Breast epithelium (tissue), 4 donors: ENCODE measurements at regions of chr2 and their contacts with region 1.

Region 1: GRCh38 chr2:227766373-227766883 is 20.7 kb downstream of the SCYGR8 start:
- DNase-seq: peak; percentile 45 to 69
- H3K4me3 ChIP-seq: no peak overlapping the region
- H3K27ac ChIP-seq: no peak overlapping the region
- H3K4me1 ChIP-seq: no peaks in the 10 kb centered on the region
- H3K27me3 ChIP-seq: no peaks in the 10 kb centered on the region
- CTCF ChIP-seq: peak; percentile 69 to 92 (median 83)
- POLR2A ChIP-seq: no peak

Region 2: DNA sequence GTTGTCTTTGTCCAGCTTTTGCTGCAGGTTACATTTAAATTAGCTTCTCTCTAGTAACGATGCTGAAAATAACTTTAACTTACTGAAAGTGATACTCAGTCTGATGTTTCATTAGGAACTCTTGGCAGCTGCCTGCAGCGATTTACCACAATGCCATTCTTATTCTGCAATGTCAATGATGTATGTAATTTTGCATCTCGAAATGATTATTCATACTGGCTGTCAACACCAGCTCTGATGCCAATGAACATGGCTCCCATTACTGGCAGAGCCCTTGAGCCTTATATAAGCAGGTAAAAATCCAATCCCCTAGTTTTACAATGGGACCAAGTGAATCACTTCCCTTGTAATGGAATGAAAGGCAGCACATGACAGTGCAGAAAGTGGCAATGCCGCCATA is 457.6 kb before region 1 on chr2:
- intact Hi-C with region 1: no loop called
- DNase-seq: no peak
- H3K4me3 ChIP-seq: no peak overlapping the region
- H3K27ac ChIP-seq: no peak overlapping the region
- H3K4me1 ChIP-seq: no peaks in the 10 kb centered on the region
- H3K27me3 ChIP-seq: no peaks in the 10 kb centered on the region
- CTCF ChIP-seq: no peak
- POLR2A ChIP-seq: no peak

Region 3: DNA sequence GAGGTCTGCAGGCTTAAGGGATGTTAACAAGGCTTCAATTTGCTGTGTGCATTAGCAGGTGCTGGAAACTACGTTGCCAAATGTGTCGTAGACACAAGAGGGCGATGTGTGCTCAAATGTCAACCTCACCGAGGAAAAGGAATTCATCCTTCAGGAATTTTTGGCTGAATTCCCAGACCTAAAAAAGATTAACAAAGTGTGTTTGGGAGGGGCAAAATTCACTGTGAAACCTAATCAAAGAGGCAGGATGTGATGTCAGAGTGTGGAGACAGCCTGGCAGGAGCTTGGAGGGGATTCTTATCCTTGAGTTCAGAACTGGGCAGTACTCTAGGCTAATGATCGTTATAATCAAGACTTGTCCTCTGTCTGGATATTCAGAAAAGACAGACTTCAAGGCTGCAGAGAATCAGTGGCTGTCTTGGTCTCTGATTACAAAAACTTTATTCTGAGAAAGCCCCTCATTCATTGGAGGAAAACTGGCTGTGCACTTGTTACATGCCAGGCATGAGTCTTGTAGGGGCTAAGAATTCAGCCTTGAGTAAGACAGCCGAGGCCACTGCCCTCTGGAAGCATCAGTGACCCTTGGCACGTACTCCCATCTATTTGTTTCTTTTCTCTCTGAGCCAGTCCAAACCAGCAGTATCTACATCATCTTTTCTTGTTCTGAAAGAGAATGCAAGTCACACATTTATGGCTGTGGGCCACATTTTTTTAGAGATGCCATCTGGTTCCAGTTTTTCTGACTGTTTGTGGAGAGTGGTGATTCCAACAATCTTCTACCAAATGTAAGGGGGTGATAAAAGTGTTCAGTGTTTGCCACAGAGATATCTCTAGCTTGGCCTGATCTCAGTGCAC is 360.0 kb before region 1 on chr2:
- intact Hi-C with region 1: loop called (anchors 10 kb)
- DNase-seq: peak in 1 of 2 donors; percentile 53
- H3K4me3 ChIP-seq: no peak overlapping the region
- H3K27ac ChIP-seq: peak overlapping the region; percentile 64 to 71
- H3K4me1 ChIP-seq: no peaks in the 10 kb centered on the region
- H3K27me3 ChIP-seq: no peaks in the 10 kb centered on the region
- CTCF ChIP-seq: peak in 2 of 3 donors; percentile 62 to 68
- POLR2A ChIP-seq: no peak

Region 4: GRCh38 chr2:227703280-227703732 is 63.1 kb before region 1 on chr2:
- intact Hi-C with region 1: no loop called
- DNase-seq: no peak
- H3K4me3 ChIP-seq: no peak overlapping the region
- H3K27ac ChIP-seq: peak overlapping the region; percentile 42 to 69
- H3K4me1 ChIP-seq: no peaks in the 10 kb centered on the region
- H3K27me3 ChIP-seq: no peaks in the 10 kb centered on the region
- CTCF ChIP-seq: no peak
- POLR2A ChIP-seq: no peak

Region 5: DNA sequence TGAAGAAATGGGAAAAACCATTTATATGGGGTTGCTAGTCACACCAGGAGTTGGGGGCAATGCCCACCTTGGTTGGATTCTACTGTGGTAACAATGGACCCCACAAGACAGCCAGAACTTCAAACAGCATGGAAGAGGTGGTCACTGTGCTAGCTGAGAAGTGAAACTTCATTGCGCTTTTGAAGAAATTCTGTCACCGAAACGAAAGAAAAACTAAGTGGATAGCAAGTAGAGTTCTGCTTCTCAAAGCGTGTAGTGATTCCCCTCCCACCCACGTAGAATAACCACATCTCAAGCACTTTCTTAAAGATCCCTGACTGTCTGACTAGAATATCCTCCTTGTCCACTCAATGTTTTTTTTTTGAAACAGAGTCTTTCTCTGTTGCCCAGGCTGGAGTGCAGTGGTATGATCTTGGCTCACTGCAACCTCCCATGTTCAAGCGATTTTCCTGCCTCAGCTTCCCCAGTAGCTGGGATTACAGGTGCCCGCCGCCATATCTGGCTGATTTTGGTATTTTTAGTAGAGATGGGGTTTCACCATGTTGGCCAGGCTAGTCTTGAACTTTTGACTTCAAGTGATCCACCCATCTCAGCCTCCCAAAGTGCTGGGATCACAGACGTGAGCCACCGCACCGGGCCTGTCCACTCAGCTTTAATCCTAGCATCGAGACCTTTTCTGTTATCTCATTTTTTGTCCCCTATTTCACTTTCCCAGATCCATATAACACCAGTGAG is 17.1 kb after region 1 on chr2:
- intact Hi-C with region 1: no loop called
- DNase-seq: no peak
- H3K4me3 ChIP-seq: peak overlapping the region in 2 of 3 donors; percentile 3 to 6
- H3K27ac ChIP-seq: no peak overlapping the region
- H3K4me1 ChIP-seq: no peaks in the 10 kb centered on the region
- H3K27me3 ChIP-seq: no peaks in the 10 kb centered on the region
- CTCF ChIP-seq: no peak
- POLR2A ChIP-seq: no peak

Region 6: DNA sequence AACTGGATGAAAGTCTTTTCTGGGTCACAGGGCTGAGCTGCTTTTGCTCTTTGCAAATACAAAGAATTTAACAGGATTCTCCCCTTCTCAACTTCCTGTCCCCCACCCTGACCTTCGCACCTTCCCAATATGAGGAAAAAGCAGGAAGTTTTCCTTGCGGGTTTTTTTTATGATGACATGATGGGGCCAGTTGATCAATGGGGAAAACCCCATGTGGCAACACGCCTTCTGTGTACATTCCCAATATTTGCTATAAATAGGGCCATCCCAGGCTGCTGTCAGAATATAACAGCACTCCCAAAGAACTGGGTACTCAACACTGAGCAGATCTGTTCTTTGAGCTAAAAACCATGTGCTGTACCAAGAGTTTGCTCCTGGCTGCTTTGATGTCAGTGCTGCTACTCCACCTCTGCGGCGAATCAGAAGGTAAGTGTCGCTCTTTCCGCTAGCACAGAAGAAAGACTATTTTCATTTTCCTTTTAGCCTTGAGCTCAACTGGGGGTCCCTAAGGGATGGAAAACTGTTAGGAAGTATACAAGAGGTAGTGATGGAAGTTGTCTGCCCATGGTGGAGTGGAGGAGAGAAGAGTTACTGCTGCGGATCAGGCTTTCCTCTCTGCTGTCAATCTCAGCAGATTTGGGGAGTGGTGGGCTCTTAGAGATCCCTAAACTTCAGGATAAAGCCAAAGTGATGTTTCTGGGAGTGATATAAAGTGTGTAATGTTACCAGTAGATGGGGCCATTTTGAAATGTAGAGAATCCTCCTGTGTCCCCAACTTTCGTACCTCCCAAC is 47.3 kb after region 1 on chr2 and contains the start of gene CCL20:
- intact Hi-C with region 1: loop called (anchors 2 kb)
- DNase-seq: no peak
- H3K4me3 ChIP-seq: no peak within 1 kb of the TSS
- H3K27ac ChIP-seq: no peak within 1 kb of the TSS
- H3K4me1 ChIP-seq: peaks cover 0 to 7% of the 10 kb centered on the region in 2 donors
- H3K27me3 ChIP-seq: peaks cover 0 to 12% of the 10 kb centered on the region in 2 donors
- CTCF ChIP-seq: no peak
- POLR2A ChIP-seq: no peak
- total RNA-seq, gene CCL20: 1.3 to 6.7 TPM in 2 of 3 donors, not detected in the other